Dendritic cell treated with granulocyte-macrophage colony-stimulating factor and Interleukin-4, amounts not matched to agents 40 ng/mL and 50 ng/mL, for 4 days (primary cell): ENCODE measurements at regions of chr15 and their contacts with region 1.

Region 1: GRCh38 chr15:41917767-41918430 is 24.0 kb upstream of the SPTBN5 start:
- H3K4me3 Mint-ChIP-seq: no peak overlapping the region
- H3K27ac Mint-ChIP-seq: peak overlapping the region; percentile 94
- H3K4me1 Mint-ChIP-seq: peaks cover 93% of the 10 kb centered on the region
- H3K27me3 Mint-ChIP-seq: no peaks in the 10 kb centered on the region

Region 2: GRCh38 chr15:41930221-41930866 is 12.4 kb after region 1 on chr15:
- intact Hi-C with region 1: loop called (anchors 1 kb)
- H3K4me3 Mint-ChIP-seq: peak overlapping the region; percentile 9
- H3K27ac Mint-ChIP-seq: peak overlapping the region; percentile 75
- H3K4me1 Mint-ChIP-seq: peaks cover 78% of the 10 kb centered on the region
- H3K27me3 Mint-ChIP-seq: no peaks in the 10 kb centered on the region

Region 3: GRCh38 chr15:41972253-41973242 is 54.6 kb after region 1 on chr15 and contains the start of gene EHD4:
- intact Hi-C with region 1: loop called (anchors 5 kb)
- H3K4me3 Mint-ChIP-seq: peak within 1 kb of the TSS; percentile 91
- H3K27ac Mint-ChIP-seq: peak within 1 kb of the TSS; percentile 93
- H3K4me1 Mint-ChIP-seq: peaks cover 51% of the 10 kb centered on the region
- H3K27me3 Mint-ChIP-seq: no peaks in the 10 kb centered on the region